Activated naive CD4-positive, alpha-beta T cell treated with anti-CD3 and anti-CD28 coated beads, Interleukin-2, amount 10 ng/mL, durations not matched to agents 7 days and 5 days (primary cell): ENCODE measurements at regions of chr22 and their contacts with region 1.

Region 1: DNA sequence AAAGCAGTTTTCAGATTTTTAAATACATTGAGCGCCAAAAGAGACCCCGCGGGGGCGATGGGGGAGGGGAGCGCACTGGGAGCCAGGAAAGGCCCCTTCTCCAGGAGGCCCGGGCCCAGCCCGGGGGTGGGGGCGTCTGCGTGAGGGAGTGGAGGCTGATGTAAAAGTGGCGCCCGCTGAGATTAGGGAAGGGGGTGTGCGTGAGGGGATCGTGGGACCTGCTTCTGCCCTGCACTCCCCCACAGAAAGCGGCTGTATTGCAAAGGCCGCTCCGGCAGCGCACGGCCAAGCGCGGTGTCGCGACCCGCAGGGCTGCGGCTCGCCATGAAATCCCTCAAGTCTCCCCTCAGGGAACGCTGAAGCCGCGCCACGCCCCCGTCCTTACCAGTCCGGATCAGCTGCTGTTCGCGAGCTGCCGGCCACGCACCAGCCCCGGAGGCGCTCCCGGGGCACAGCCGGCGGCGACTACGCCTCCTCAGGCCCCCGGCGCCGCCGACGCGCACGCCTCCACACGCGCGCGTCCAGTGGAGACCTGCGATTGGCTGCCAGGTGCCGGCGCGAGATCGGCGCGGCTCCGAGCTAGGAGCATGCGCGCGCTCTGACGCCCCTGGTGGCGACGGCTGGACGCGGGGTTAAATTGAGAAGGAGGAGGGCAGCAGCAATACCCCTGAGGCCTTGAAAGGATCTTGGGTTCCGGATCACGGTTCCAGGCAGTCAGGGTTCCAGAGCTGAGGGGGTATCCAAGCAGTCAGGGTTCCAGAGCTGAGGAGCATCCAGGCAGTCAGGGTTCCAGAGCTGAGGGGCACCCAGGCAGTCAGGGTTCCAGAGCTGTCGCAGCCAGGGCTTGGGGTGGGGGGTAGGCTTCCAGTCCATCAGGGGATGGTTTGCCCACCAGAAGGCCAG is at the start of gene ZNF280B:
- DNase-seq: peak; percentile 89
- H3K4me3 Mint-ChIP-seq: peak within 1 kb of the TSS; percentile 80
- H3K27ac Mint-ChIP-seq: peak within 1 kb of the TSS; percentile 39
- H3K4me1 Mint-ChIP-seq: peaks cover 12% of the 10 kb centered on the region
- H3K27me3 Mint-ChIP-seq: peaks cover 11% of the 10 kb centered on the region

Region 2: GRCh38 chr22:21889251-21889990 is 619.1 kb before region 1 on chr22:
- CTCF ChIA-PET with region 1: no interaction called
- DNase-seq: no peak
- H3K4me3 Mint-ChIP-seq: no peak overlapping the region
- H3K27ac Mint-ChIP-seq: no peak overlapping the region
- H3K4me1 Mint-ChIP-seq: no peaks in the 10 kb centered on the region
- H3K27me3 Mint-ChIP-seq: peaks cover 4% of the 10 kb centered on the region

Region 3: DNA sequence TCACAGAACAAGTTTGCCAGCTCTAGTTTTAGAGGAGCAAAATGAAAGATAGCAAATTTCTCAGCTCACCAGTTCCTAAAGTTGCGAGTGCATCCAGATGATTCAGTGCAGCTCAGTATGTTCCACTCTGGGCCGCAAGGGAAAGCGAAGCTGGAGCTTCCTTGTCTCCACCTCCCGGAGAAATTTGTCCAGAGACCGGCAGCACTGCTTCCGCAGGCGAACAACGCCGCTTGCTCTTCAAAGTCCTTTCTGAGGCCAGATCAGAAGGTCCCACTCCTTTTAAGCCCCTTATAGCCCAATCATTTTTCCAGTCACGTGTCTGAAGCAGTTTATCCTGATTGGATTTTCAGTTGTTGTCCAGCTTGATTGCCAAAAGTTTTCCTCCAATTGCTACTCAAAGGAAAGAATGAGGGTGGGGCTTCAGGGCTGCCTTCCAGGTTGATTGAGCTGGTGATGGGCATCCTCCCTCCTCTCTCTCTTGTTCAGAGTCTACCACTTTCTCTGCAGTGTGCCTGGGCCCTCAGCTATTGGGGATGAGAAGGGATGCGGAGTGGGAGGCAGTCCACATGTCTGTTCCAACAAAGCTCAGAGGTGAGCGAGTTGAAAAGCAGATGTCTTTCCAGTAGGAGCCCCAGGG is 11.6 kb after region 1 on chr22 and contains the start of gene ZNF280A:
- CTCF ChIA-PET with region 1: interaction called, 10 read pairs
- DNase-seq: no peak
- H3K4me3 Mint-ChIP-seq: no peak within 1 kb of the TSS
- H3K27ac Mint-ChIP-seq: no peak within 1 kb of the TSS
- H3K4me1 Mint-ChIP-seq: no peaks in the 10 kb centered on the region
- H3K27me3 Mint-ChIP-seq: peaks cover 40% of the 10 kb centered on the region

Region 4: GRCh38 chr22:22546490-22546889 is 38.0 kb after region 1 on chr22:
- CTCF ChIA-PET with region 1: no interaction called
- DNase-seq: no peak
- H3K4me3 Mint-ChIP-seq: no peak overlapping the region
- H3K27ac Mint-ChIP-seq: no peak overlapping the region
- H3K4me1 Mint-ChIP-seq: no peaks in the 10 kb centered on the region
- H3K27me3 Mint-ChIP-seq: peaks cover 20% of the 10 kb centered on the region